Activated T-helper 2 cell treated with anti-CD3 and anti-CD28 coated beads, Interferon-gamma antibody, Interleukin-2, Interleukin-4, amounts not matched to agents 10 μg/mL and 5 μg/mL and 100 μg/mL, durations not matched to agents 14 hours and 24 hours and 36 hours (primary cell): ENCODE measurements at regions of chr14 and their contacts with region 1.

Region 1: GRCh38 chr14:39114073-39114838 is at the start of gene GEMIN2:
- DNase-seq: peak; percentile 94
- H3K4me3 Mint-ChIP-seq: peak within 1 kb of the TSS; percentile 96
- H3K27ac Mint-ChIP-seq: peak within 1 kb of the TSS; percentile 96
- H3K4me1 Mint-ChIP-seq: peaks cover 18% of the 10 kb centered on the region
- H3K27me3 Mint-ChIP-seq: no peaks in the 10 kb centered on the region
- total RNA-seq, gene GEMIN2: 22.0 and 22.1 TPM in 2 replicates

Region 2: GRCh38 chr14:38616959-38617358 is 497.3 kb before region 1 on chr14:
- intact Hi-C with region 1: no loop called
- DNase-seq: no peak
- H3K4me3 Mint-ChIP-seq: no peak overlapping the region
- H3K27ac Mint-ChIP-seq: no peak overlapping the region
- H3K4me1 Mint-ChIP-seq: no peaks in the 10 kb centered on the region
- H3K27me3 Mint-ChIP-seq: no peaks in the 10 kb centered on the region

Region 3: GRCh38 chr14:39097159-39097558 is 17.1 kb before region 1 on chr14:
- intact Hi-C with region 1: loop called (anchors 2 kb)
- DNase-seq: no peak
- H3K4me3 Mint-ChIP-seq: peak overlapping the region; percentile 51
- H3K27ac Mint-ChIP-seq: peak overlapping the region; percentile 80
- H3K4me1 Mint-ChIP-seq: peaks cover 33% of the 10 kb centered on the region
- H3K27me3 Mint-ChIP-seq: no peaks in the 10 kb centered on the region

Region 4: GRCh38 chr14:39102969-39103957 is 11.0 kb before region 1 on chr14 and contains the start of gene SEC23A:
- intact Hi-C with region 1: loop called (anchors 1 kb)
- DNase-seq: peak; percentile 82
- H3K4me3 Mint-ChIP-seq: peak within 1 kb of the TSS; percentile 98
- H3K27ac Mint-ChIP-seq: peak within 1 kb of the TSS; percentile 98
- H3K4me1 Mint-ChIP-seq: peaks cover 29% of the 10 kb centered on the region
- H3K27me3 Mint-ChIP-seq: no peaks in the 10 kb centered on the region
- total RNA-seq, gene SEC23A: 76.4 and 86.7 TPM in 2 replicates

Region 5: GRCh38 chr14:39266871-39267591 is 152.8 kb after region 1 on chr14:
- intact Hi-C with region 1: loop called (anchors 1 kb)
- DNase-seq: peak; percentile 73
- H3K4me3 Mint-ChIP-seq: peak overlapping the region; percentile 75
- H3K27ac Mint-ChIP-seq: peak overlapping the region; percentile 93
- H3K4me1 Mint-ChIP-seq: peaks cover 43% of the 10 kb centered on the region
- H3K27me3 Mint-ChIP-seq: no peaks in the 10 kb centered on the region

Region 6: DNA sequence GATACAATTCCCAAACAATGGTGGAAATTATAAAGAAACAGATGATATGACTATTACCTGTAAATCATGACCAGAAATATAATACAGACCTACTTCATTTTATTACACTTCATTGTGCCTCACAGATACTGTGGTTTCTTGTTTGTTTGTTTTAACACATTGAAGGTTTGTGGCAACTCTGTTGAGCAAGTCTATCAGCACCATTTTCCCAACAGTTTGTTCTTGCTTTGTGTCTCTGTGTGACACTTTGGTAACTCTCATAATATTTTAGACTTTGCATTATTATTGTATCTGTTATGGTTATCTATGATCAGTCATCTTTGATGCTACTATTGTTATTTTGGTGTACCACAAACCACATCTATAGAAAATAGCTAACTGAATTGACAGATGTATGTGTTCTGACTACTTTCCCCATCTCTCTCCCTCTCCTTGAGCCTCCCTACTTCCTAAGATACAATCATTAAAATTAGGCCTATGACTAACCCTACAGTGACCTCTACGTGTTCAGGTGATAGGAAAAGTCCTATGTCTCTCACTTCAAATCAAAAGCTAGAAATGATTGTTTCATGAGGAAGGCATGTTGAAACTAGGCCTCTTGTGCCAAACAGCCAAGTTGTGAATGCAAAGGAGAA is 268.9 kb after region 1 on chr14:
- intact Hi-C with region 1: loop called (anchors 5 kb)
- DNase-seq: no peak
- H3K4me3 Mint-ChIP-seq: no peak overlapping the region
- H3K27ac Mint-ChIP-seq: peak overlapping the region; percentile 36
- H3K4me1 Mint-ChIP-seq: peaks cover 37% of the 10 kb centered on the region
- H3K27me3 Mint-ChIP-seq: no peaks in the 10 kb centered on the region